ENCODE measurements at regions of chr17 and their contacts with region 1.

Region 1: GRCh38 chr17:70976447-70976846 is 807.1 kb downstream of the KCNJ2 start:
- DNase-seq: no peak
- H3K4me3 ChIP-seq: no peak overlapping the region
- H3K27ac ChIP-seq: no peak overlapping the region
- H3K4me1 ChIP-seq: no peaks in the 10 kb centered on the region
- H3K27me3 ChIP-seq: no peaks in the 10 kb centered on the region
- CTCF ChIP-seq: no peak
- EP300 ChIP-seq: no peak
- POLR2A ChIP-seq: no peak

Region 2: DNA sequence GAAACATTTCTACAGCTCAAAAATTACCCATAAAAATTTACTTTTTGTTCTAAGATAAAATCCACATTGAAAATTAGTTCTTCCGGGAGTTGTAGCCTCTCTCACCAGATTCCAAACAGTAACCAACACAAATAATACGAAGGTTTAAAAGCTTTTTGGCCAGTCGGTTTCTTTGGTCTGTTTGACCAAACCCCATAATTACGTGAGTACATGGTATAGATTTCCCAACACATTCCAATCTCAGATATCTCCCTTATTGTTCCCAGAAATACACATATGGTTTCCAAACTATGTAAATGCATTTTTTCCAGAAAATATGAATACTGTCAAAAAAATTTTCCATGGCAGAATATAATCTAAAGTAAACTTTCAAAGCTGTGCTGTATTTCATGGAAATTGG is 85.1 kb before region 1 on chr17:
- in situ Hi-C with region 1: no loop called
- intact Hi-C with region 1: no loop called
- DNase-seq: no peak
- H3K4me3 ChIP-seq: no peak overlapping the region
- H3K27ac ChIP-seq: no peak overlapping the region
- H3K4me1 ChIP-seq: no peaks in the 10 kb centered on the region
- H3K27me3 ChIP-seq: no peaks in the 10 kb centered on the region
- CTCF ChIP-seq: no peak
- EP300 ChIP-seq: no peak
- POLR2A ChIP-seq: no peak

Region 3: GRCh38 chr17:71052971-71053370 is 76.5 kb after region 1 on chr17:
- in situ Hi-C with region 1: loop called in 1 of 4 experiments (anchors 10 kb)
- intact Hi-C with region 1: no loop called
- DNase-seq: no peak
- H3K4me3 ChIP-seq: no peak overlapping the region
- H3K27ac ChIP-seq: no peak overlapping the region
- H3K4me1 ChIP-seq: no peaks in the 10 kb centered on the region
- H3K27me3 ChIP-seq: no peaks in the 10 kb centered on the region
- CTCF ChIP-seq: no peak
- EP300 ChIP-seq: no peak
- POLR2A ChIP-seq: no peak